ENCODE measurements at regions of chr7 and their contacts with region 1.

Region 1: DNA sequence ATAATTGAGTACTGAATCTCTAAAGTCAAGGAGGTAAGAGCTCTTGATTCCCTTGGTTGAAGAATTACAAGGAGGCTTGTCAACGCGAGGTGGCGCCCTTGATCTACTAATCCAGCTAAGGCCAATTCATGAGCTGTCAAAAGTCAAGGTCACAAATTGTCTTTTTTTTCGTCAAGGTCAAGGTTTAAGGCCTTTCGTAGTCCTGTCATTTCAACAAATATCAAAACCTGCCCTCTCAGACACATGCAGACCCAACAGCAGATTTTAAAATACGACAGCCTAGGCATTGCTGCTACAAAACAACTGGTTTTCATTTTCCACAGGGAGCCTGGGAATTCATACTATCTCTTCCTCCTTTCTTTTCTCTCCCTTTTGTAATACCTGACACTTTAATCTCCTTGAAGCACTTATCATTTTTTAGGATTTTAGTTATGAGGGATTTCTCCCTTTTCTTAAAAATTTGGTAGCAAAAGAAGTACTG is 3.6 kb downstream of the HOXA13 start:
- DNase-seq: peak; percentile 86

Region 2: GRCh38 chr7:27921081-27921836 is 724.9 kb after region 1 on chr7:
- intact Hi-C with region 1: loop called (anchors 5 kb)
- DNase-seq: no peak

Region 3: GRCh38 chr7:28020302-28020940 is 824.1 kb after region 1 on chr7:
- intact Hi-C with region 1: loop called (anchors 5 kb)
- DNase-seq: no peak

Region 4: DNA sequence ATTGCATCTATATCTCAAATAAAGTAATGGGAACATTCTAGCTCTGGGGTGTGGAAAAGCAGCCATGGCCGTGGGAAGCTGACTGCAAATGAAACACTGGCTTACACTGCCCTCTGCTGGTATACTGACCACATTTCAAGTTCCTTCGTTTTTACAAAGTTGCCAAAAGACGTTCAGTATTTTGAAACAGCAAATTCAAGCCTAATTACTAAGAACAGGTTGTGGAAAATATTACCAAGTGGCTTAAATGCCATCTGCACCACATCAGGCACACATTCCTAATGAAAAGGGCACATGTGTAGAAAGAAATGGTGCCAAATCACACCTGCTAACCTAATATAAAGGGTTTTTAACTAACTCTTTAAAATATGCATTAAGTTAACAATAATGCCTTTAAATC is 900.4 kb after region 1 on chr7:
- intact Hi-C with region 1: loop called (anchors 10 kb)
- DNase-seq: no peak

Measured in cardiac septum (tissue), 1 donor.